AG04450 (cell line): ENCODE measurements at regions of chr16 and their contacts with region 1.

Region 1: DNA sequence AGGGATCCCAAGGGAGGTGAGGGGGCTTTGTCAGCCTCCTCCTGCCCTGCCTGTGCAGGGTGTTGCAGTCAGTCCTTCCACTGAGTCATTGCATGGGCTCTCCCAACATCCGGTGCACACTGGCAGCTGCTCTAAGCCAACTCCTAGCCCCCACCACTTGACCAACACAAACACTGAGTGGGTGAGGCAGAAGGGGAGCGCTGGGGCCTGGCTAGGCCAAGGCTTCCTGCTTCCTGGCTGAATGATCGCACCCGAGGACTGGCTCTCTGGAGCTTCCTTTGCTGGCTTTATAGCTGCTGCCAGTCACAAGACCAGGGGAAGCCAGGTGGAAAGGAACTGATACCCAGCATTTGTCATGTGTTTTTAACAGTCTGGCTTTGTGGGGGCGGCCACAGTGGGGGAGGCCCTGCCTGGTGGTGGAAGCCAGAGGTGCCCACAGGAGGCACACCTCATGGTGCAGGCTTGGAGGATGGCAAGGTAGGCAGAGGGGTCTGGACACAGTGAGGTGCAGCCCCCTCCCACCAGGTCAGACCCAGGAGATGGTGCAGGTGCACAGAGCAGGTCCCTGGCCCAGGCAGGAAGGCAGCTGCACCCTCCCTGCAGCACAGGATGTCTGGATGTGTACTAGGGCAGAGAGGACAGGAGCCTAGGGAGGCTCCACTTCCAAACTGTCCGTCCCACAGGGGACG is 6.8 kb downstream of the MPG start:
- DNase-seq: peak; percentile 88
- H3K4me3 ChIP-seq: 0 out of 2 replicates have a peak overlapping the region, but pooled peaks have one; percentile 10
- H3K27ac ChIP-seq: peak overlapping the region; percentile 91
- H3K27me3 ChIP-seq: no peaks in the 10 kb centered on the region
- CTCF ChIP-seq: no peak

Region 2: DNA sequence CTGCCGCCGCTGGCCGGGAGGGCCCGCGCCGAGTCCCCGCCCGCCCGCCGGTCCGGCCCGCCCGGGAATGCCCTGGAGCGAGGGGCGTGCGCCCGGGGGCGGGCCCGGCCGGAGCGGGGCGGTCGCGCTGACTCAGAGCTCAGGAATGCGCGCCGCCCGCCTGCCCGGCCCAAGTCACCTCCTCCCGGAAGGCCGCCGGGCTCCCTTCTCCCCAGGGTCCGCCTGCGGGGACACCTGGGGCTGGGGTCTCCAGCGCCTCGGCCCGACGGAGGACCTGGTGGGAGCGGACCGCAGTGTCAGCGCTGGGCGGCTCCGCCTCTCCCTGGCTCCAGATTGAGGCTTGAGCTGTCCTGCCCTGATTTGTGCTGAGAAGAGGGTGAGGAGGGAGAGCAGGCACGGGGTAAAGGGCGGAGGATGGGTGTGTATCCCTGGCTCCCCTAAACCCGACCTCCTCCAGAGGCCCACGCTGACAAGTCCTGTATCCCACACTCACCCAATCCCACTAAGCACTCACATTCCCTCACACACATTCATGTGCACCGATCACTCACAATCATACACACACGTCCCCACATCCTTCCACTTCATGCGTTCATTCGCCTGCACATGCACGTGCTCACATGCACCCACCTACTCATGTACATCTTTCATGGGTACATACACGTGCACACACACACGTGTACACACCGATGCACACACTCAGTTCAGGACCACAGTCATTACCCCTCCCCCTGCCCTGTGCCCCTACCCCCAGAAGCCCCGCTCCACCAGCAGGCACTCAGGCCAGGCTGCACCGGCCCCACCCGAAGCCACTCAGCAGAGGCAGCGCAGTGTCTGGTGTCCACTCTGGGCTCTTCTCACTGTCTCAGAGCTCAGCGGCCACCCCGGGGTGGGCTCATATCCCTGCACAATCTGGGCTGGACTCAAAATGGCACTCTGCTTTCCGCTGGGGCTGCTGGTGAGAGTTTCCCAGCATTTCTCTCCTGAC is 12.0 kb before region 1 on chr16 and contains the start of gene RHBDF1:
- CTCF ChIA-PET with region 1: interaction called, 3 read pairs
- POLR2A ChIA-PET with region 1: interaction called, 12 read pairs
- DNase-seq: no peak
- H3K4me3 ChIP-seq: peak within 1 kb of the TSS; percentile 89
- H3K27ac ChIP-seq: peak within 1 kb of the TSS; percentile 52
- H3K27me3 ChIP-seq: no peaks in the 10 kb centered on the region
- CTCF ChIP-seq: no peak
- polyA plus RNA-seq, gene RHBDF1: 50.2 and 61.7 TPM in 2 replicates

Region 3: DNA sequence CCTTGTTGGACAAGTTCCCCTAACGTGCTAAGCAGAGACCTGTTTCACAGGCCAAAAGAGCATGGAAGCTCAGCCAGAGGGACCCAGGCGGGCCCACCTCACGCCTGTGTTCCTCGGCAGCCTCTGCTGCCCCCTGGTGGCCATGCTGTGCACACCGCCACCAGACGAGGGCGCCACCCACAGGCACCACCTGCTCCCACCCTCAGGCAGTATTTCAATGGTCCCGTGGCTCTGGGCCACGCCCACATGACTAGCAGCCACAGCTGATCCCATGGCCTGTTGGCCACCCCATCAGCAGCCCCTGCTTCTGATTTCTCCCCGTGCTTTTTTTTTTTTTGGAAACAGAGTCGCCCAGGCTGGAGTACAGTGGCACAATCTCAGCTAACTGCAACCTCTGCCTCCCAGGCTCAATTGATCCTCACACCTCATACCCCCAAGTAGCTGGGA is 12.1 kb after region 1 on chr16:
- CTCF ChIA-PET with region 1: interaction called, 25 read pairs
- POLR2A ChIA-PET with region 1: interaction called, 4 read pairs
- DNase-seq: no peak
- H3K4me3 ChIP-seq: no peak overlapping the region
- H3K27ac ChIP-seq: no peak overlapping the region
- H3K27me3 ChIP-seq: no peaks in the 10 kb centered on the region
- CTCF ChIP-seq: peak; percentile 99

Region 4: DNA sequence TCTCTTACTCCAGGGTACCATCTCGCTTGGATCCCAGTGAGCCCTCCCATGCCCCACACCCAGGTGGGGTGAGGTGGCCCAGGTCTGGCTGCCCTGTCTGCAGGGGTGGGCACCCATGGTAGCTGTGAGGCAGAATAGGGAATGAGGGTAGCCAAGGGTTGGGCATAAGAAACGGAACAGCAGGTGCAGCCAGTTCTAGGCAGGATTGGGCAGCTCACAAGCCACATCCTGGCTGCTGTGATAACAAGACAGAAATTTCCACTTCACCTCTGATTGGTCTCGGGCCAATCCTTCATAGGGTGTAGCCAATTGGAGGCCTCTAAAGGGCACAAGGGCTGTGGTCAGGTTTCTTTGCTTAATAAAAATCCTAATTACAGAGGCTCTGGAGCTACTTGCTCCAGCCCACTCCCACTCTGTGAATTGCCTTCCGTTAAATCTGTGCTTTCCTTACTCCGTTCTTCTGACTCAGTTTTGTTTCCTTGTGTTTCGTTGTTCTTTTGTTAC is 194.1 kb after region 1 on chr16:
- CTCF ChIA-PET with region 1: no interaction called
- POLR2A ChIA-PET with region 1: no interaction called
- DNase-seq: no peak
- H3K4me3 ChIP-seq: no peak overlapping the region
- H3K27ac ChIP-seq: no peak overlapping the region
- H3K27me3 ChIP-seq: peaks cover 42% of the 10 kb centered on the region
- CTCF ChIP-seq: no peak